ENCODE measurements at regions of chr12 and their contacts with region 1.

Region 1: DNA sequence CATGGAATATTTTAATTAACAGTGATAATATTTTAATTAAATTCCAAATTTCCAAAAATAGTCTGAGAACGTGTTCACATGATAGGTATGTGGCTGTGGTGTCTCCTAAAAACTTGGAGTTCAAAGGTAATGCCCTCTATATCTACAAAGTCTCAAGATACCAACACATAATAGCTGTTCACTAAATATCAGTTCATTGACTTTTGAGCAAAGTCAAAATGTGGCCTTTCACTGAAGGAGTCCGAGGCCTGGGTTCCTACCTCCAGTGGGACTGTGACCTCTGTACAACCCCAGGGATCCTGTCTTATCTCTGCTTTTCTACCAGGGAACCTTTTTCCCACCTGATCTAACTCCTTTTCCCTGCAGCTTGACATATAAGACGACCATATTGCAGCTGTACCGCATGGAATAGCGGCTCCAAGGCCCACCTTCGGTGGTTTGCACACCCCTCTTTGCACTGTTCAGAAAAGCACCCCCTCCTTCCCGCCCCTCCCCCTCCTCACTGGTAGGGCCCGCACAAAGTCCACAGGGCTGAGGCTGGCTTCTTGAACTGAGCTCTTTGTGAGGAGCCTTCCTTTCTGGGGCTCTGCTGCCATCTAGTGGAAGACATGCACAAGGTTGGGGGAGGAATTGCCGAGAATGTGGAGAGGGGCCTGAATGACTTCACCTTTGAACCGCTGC is 3.1 kb downstream of the CCND2 start:
- DNase-seq: peak; percentile 76 to 94 (median 84)
- ATAC-seq: peak; percentile 27
- H3K4me3 ChIP-seq: peak overlapping the region; percentile 95
- H3K4me3 Mint-ChIP-seq: peak overlapping the region; percentile 95
- H3K27ac ChIP-seq: peak overlapping the region; percentile 19 to 82
- H3K27ac Mint-ChIP-seq: peak overlapping the region; percentile 99
- H3K4me1 ChIP-seq: peaks cover 80% of the 10 kb centered on the region
- H3K4me1 Mint-ChIP-seq: peaks cover 71% of the 10 kb centered on the region
- H3K27me3 ChIP-seq: no peaks in the 10 kb centered on the region
- H3K27me3 Mint-ChIP-seq: no peaks in the 10 kb centered on the region
- CTCF ChIP-seq: peak; percentile 89

Region 2: DNA sequence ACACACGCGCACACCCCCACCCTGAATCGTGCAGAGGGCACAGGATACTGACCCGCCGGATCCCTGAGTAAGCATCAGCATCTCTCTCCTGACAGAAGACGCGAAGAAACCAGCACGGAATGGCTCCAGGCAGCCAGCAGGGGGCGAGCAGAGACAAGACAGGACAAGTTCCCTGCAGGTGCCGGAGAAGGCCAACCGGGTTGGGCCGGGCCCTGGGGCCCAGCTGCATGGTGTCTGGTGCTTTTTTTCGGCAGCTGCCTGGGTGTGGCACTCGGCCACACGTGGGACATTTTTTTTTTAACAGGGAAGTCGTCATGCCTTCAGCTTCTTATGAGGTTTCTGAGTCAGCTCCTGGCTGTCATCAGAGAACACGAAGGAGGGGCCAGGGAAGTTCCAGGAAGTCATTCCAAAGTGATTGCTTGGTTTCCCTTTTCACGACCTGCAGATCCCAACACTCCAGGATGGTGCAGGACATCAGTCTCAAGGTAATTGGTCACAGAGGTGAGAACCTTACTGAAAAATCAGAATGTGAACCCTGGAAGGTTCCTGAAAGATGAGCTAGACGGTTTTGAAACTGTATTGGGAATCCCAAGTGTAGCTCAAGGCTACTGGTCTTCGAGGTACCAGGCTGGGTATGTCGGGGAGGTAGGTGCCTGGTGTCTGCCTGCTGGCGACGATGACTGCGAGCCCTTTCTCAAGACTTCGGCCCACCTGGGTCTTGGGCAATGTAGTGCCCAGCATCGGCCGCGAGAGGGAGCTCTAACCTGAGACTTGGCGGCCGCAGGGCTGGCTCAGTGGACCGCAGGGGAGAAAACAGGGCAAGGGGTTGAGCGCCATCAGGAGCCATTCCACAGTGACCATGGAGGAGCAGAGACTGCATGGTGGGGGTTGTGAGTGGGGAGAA is 976.5 kb before region 1 on chr12:
- CTCF ChIA-PET with region 1: interaction called, 3 read pairs
- POLR2A ChIA-PET with region 1: no interaction called
- intact Hi-C with region 1: loop called in 1 of 2 experiments (anchors 1 kb)
- DNase-seq: peak; percentile 64 to 88 (median 75)
- ATAC-seq: peak; percentile 86
- H3K4me3 ChIP-seq: peak overlapping the region; percentile 24
- H3K4me3 Mint-ChIP-seq: peak overlapping the region; percentile 42
- H3K27ac ChIP-seq: no peak overlapping the region
- H3K27ac Mint-ChIP-seq: peak overlapping the region; percentile 61
- H3K4me1 ChIP-seq: peaks cover 12% of the 10 kb centered on the region
- H3K4me1 Mint-ChIP-seq: peaks cover 12% of the 10 kb centered on the region
- H3K27me3 ChIP-seq: peaks cover 0 to 6% of the 10 kb centered on the region in 2 experiments
- H3K27me3 Mint-ChIP-seq: peaks cover 14% of the 10 kb centered on the region
- CTCF ChIP-seq: peak; percentile 93

Region 3: GRCh38 chr12:3885277-3886094 is 391.2 kb before region 1 on chr12:
- CTCF ChIA-PET with region 1: interaction called, 72 read pairs
- POLR2A ChIA-PET with region 1: interaction called, 53 read pairs
- intact Hi-C with region 1: loop called (anchors 1 kb)
- DNase-seq: peak in 10 of 14 experiments; percentile 26 to 83 (median 43)
- ATAC-seq: peak; percentile 46
- H3K4me3 ChIP-seq: no peak overlapping the region
- H3K4me3 Mint-ChIP-seq: no peak overlapping the region
- H3K27ac ChIP-seq: no peak overlapping the region
- H3K27ac Mint-ChIP-seq: peak overlapping the region; percentile 38
- H3K4me1 ChIP-seq: peaks cover 10% of the 10 kb centered on the region
- H3K4me1 Mint-ChIP-seq: peaks cover 17% of the 10 kb centered on the region
- H3K27me3 ChIP-seq: no peaks in the 10 kb centered on the region
- H3K27me3 Mint-ChIP-seq: no peaks in the 10 kb centered on the region
- CTCF ChIP-seq: peak; percentile 97

Region 4: DNA sequence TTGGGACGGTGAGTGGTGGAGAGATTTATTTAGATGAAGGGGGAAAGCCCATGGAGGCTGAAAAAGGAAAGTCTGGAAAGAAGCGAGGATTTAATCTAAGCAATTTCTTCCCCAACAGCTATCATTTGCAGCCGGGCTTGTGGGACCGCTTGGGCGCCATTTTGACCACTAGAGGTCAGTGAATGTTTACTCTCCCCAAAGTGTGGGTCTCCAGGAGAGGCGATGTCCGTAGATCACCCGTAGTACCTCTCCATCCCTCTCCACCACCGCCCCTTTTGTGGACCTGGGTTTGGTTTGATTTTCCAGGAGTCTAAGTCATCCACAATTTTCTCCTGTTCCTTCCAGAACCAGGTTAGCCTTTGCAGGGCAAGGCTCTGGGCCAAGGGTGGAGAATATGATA is 312.2 kb before region 1 on chr12:
- CTCF ChIA-PET with region 1: interaction called, 28 read pairs
- POLR2A ChIA-PET with region 1: interaction called, 29 read pairs
- intact Hi-C with region 1: loop called (anchors 10 kb)
- DNase-seq: no peak
- ATAC-seq: no peak
- H3K4me3 ChIP-seq: no peak overlapping the region
- H3K4me3 Mint-ChIP-seq: no peak overlapping the region
- H3K27ac ChIP-seq: no peak overlapping the region
- H3K27ac Mint-ChIP-seq: peak overlapping the region; percentile 66
- H3K4me1 ChIP-seq: peaks cover 24% of the 10 kb centered on the region
- H3K4me1 Mint-ChIP-seq: peaks cover 33% of the 10 kb centered on the region
- H3K27me3 ChIP-seq: no peaks in the 10 kb centered on the region
- H3K27me3 Mint-ChIP-seq: no peaks in the 10 kb centered on the region
- CTCF ChIP-seq: no peak

Region 5: GRCh38 chr12:4030929-4031702 is 245.5 kb before region 1 on chr12:
- CTCF ChIA-PET with region 1: interaction called, 8 read pairs
- POLR2A ChIA-PET with region 1: interaction called, 15 read pairs
- intact Hi-C with region 1: loop called (anchors 2 to 5 kb)
- DNase-seq: peak; percentile 47 to 90 (median 70)
- ATAC-seq: peak; percentile 86
- H3K4me3 ChIP-seq: peak overlapping the region; percentile 60
- H3K4me3 Mint-ChIP-seq: peak overlapping the region; percentile 84
- H3K27ac ChIP-seq: peak overlapping the region in 1 of 2 donors; percentile 25
- H3K27ac Mint-ChIP-seq: peak overlapping the region; percentile 83
- H3K4me1 ChIP-seq: peaks cover 37% of the 10 kb centered on the region
- H3K4me1 Mint-ChIP-seq: peaks cover 47% of the 10 kb centered on the region
- H3K27me3 ChIP-seq: no peaks in the 10 kb centered on the region
- H3K27me3 Mint-ChIP-seq: no peaks in the 10 kb centered on the region
- CTCF ChIP-seq: no peak

Region 6: DNA sequence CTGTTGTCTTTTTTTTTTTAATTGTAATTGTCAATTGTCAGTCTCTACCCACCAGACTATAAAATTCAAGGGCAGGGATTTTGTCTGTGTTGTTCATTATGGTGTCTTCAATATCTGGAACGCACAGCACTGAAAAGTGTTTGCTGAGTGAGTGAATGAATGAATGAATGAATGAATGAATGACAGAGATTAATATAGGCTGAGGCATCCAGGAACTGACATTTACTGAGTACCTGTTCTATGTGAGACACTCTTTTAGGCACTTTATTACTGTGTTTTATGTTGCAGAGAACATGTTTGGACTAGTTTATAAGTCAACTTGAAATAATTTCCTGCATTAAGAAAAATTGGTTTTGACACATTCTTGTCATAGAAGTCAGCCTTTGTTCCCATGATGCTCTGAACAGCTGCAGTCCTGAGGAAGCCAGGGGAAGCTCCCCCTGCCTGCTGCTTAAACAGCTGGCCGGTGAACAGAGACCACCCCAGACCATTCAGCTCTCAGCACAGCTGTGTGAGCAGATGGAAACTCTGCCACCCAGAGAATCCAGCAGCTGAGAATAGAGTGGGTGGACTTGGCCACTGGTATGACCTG is 163.8 kb before region 1 on chr12:
- CTCF ChIA-PET with region 1: interaction called, 14 read pairs
- POLR2A ChIA-PET with region 1: interaction called, 24 read pairs
- intact Hi-C with region 1: no loop called
- DNase-seq: no peak
- ATAC-seq: no peak
- H3K4me3 ChIP-seq: no peak overlapping the region
- H3K4me3 Mint-ChIP-seq: no peak overlapping the region
- H3K27ac ChIP-seq: no peak overlapping the region
- H3K27ac Mint-ChIP-seq: no peak overlapping the region
- H3K4me1 ChIP-seq: peaks cover 30% of the 10 kb centered on the region
- H3K4me1 Mint-ChIP-seq: peaks cover 30% of the 10 kb centered on the region
- H3K27me3 ChIP-seq: no peaks in the 10 kb centered on the region
- H3K27me3 Mint-ChIP-seq: no peaks in the 10 kb centered on the region
- CTCF ChIP-seq: no peak

Region 7: GRCh38 chr12:4164559-4165558 is 111.8 kb before region 1 on chr12:
- CTCF ChIA-PET with region 1: interaction called, 9 read pairs
- POLR2A ChIA-PET with region 1: interaction called, 13 read pairs
- intact Hi-C with region 1: no loop called
- DNase-seq: peak in 13 of 14 experiments; percentile 33 to 75 (median 45)
- ATAC-seq: peak; percentile 96
- H3K4me3 ChIP-seq: peak overlapping the region; percentile 66
- H3K4me3 Mint-ChIP-seq: peak overlapping the region; percentile 92
- H3K27ac ChIP-seq: peak overlapping the region in 1 of 2 donors; percentile 18
- H3K27ac Mint-ChIP-seq: peak overlapping the region; percentile 83
- H3K4me1 ChIP-seq: peaks cover 14% of the 10 kb centered on the region
- H3K4me1 Mint-ChIP-seq: peaks cover 19% of the 10 kb centered on the region
- H3K27me3 ChIP-seq: no peaks in the 10 kb centered on the region
- H3K27me3 Mint-ChIP-seq: no peaks in the 10 kb centered on the region
- CTCF ChIP-seq: no peak

Measured in CD4-positive, alpha-beta T cell (primary cell).